Left ventricle myocardium inferior (tissue), 1 donor: ENCODE measurements at regions of chr15 and their contacts with region 1.

Region 1: GRCh38 chr15:42929306-42929848 is 8.8 kb upstream of the TTBK2 start:
- DNase-seq: no peak
- H3K4me3 ChIP-seq: no peak overlapping the region
- H3K27ac ChIP-seq: peak overlapping the region; percentile 43
- H3K4me1 ChIP-seq: peaks cover 9% of the 10 kb centered on the region
- H3K27me3 ChIP-seq: no peaks in the 10 kb centered on the region
- CTCF ChIP-seq: no peak

Region 2: GRCh38 chr15:42704492-42704926 is 224.9 kb before region 1 on chr15:
- intact Hi-C with region 1: loop called (anchors 5 kb)
- DNase-seq: no peak
- H3K4me3 ChIP-seq: no peak overlapping the region
- H3K27ac ChIP-seq: no peak overlapping the region
- H3K4me1 ChIP-seq: peaks cover 6% of the 10 kb centered on the region
- H3K27me3 ChIP-seq: no peaks in the 10 kb centered on the region
- CTCF ChIP-seq: peak; percentile 84

Region 3: GRCh38 chr15:42736793-42737528 is 192.4 kb before region 1 on chr15 and contains the start of gene CDAN1:
- intact Hi-C with region 1: no loop called
- DNase-seq: peak; percentile 94
- H3K4me3 ChIP-seq: peak within 1 kb of the TSS; percentile 97
- H3K27ac ChIP-seq: peak within 1 kb of the TSS; percentile 90
- H3K4me1 ChIP-seq: peaks cover 33% of the 10 kb centered on the region
- H3K27me3 ChIP-seq: no peaks in the 10 kb centered on the region
- CTCF ChIP-seq: no peak
- total RNA-seq, gene CDAN1: 6.2 TPM